ENCODE measurements at regions of chr11 and their contacts with region 1.

Region 1: GRCh38 chr11:77547863-77548551 is 41.7 kb upstream of the AQP11 start:
- DNase-seq: peak; percentile 62

Region 2: DNA sequence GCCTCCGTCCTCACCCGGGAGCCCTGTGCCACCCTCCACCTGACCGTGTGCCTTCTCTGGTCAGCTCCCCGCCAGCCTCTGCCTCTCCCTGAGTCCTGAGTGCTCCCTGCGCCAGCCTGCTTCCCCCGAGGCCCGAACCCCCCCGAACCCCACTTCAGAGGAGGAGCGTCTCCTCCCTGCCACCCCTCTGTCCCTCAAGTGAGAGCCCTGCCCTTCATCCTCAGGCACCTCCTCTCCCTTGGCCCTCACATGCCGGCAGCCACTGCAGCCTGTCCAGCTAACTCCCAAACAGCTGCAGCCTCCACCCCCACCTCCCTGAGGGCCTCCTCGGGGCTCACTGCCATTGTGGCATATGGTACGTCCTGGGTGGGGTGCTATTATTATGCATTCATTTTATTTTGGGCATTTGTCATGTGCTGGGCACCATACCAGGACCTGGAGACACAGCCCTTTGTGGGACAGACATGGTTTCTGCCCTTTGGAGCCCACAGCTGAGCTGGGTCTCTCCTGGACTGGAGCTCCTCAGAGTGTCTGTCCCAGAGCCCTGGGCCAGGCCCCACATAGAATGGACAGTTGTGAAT is 352.7 kb before region 1 on chr11:
- CTCF ChIA-PET with region 1: interaction called, 19 read pairs
- POLR2A ChIA-PET with region 1: no interaction called
- DNase-seq: no peak

Region 3: GRCh38 chr11:77471558-77472193 is 76.3 kb before region 1 on chr11:
- CTCF ChIA-PET with region 1: interaction called, 10 read pairs
- POLR2A ChIA-PET with region 1: interaction called, 3 read pairs
- DNase-seq: peak; percentile 34